HAP-1 (cell line): ENCODE measurements at regions of chr15 and their contacts with region 1.

Region 1: DNA sequence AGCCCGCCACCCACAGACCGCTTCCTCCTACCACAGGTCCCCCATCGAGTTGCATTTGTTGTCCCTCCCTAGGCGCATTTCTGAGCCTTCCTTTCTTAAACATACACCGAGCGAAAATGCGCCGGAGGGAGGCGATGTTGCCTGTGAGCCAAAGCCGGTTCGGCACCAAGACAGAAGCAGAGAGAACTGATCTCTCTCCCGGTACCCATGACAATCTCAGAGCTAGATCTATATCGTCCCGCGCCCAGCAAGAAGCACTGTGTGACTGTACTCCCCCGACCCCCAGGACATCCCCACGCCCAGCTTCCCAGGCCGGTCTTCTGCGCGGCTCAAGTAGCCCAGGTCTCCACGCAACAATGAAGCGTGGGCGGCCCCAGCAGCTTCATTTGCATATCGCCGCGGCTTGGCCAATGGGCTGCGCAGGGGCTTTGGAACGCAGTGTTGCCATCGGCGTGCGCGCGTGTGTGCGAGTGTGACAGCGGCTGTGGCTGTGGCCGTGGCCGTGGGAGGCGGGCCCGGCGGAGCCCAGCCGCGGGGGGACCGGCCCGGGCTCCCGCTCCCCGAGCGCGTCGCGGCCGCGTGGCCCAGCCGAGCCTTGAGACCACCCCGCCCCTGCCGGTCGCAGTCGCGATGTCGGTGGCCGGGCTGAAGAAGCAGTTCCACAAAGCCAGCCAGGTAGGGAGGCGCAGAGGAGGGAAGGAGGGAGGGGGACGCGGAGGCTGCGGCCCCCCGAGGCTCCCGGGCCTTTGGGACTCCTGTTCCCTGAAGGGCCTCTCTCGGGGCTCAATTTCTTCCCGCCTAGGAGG is at the start of gene SH3GL3:
- DNase-seq: peak; percentile 87 to 96
- H3K4me3 ChIP-seq: peak within 1 kb of the TSS; percentile 63
- H3K4me1 ChIP-seq: peaks cover 3% of the 10 kb centered on the region; the same call in 1 of the 2 replicates
- H3K27me3 ChIP-seq: no peaks in the 10 kb centered on the region

Region 2: DNA sequence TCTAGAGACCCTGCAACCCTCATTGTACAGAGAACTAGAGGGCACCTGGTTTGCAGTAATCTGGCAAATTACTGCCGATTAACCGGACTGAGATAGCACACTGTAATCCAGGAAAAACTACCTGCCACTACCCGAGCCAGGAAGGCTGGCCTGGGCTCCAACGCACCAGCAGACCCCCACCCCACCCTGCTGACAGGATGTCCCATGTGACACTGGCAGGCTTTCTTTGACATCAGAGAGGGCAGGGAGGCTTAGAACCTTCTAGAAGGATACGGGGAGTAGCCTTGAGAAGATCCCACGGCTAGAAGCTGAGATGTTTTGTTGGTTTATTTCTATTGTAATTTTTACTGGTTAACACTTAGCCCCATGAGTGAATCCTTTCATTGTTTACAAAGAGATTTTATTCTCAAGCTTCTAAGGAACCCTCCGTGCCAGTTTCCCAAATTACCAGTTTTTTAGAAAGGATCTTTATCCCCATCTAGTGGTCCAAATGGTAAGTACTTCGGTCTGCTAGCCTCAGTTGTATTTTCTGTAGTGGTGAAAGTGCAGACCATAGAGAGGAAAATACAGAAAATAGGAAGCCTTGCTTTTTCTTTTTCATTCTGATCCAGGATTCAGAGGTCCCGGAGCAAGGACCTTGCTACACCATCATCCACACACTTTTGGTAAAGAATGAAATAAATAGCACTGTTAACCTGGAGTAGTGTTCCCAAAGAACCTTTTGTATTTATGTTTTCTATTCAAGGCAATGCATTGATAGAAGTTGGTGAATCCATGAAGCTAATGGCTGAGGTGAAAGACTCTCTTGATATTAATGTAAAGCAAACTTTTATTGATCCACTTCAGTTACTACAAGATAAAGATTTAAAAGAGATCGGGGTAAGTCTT is 125.0 kb after region 1 on chr15:
- in situ Hi-C with region 1: no loop called
- DNase-seq: peak in 1 of 2 experiments; percentile 75
- H3K4me3 ChIP-seq: no peak overlapping the region
- H3K4me1 ChIP-seq: no peaks in the 10 kb centered on the region
- H3K27me3 ChIP-seq: no peaks in the 10 kb centered on the region

Region 3: DNA sequence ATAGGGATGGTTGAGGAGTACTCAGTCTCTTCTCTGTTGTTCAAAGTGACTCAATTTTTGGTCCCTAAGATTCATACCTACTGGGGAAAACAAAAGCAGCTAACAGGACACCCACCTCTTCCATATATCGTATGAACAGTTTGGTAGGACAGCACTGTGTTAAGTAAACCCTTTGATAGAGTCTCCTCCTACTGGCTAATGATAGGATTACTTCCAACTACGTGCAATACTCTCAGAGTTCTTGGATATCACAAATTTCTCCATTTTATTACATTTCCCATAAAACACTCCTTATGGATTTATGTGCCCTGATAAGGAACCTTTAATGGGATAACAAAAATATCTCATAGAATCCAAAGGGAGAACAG is 588.3 kb after region 1 on chr15:
- in situ Hi-C with region 1: loop called (anchors 25 kb)
- DNase-seq: peak in 1 of 2 experiments; percentile 35
- H3K4me3 ChIP-seq: no peak overlapping the region
- H3K4me1 ChIP-seq: no peaks in the 10 kb centered on the region
- H3K27me3 ChIP-seq: peaks cover 3% of the 10 kb centered on the region; the same call in 1 of the 2 replicates